ENCODE measurements at regions of chr16 and their contacts with region 1.

Region 1: DNA sequence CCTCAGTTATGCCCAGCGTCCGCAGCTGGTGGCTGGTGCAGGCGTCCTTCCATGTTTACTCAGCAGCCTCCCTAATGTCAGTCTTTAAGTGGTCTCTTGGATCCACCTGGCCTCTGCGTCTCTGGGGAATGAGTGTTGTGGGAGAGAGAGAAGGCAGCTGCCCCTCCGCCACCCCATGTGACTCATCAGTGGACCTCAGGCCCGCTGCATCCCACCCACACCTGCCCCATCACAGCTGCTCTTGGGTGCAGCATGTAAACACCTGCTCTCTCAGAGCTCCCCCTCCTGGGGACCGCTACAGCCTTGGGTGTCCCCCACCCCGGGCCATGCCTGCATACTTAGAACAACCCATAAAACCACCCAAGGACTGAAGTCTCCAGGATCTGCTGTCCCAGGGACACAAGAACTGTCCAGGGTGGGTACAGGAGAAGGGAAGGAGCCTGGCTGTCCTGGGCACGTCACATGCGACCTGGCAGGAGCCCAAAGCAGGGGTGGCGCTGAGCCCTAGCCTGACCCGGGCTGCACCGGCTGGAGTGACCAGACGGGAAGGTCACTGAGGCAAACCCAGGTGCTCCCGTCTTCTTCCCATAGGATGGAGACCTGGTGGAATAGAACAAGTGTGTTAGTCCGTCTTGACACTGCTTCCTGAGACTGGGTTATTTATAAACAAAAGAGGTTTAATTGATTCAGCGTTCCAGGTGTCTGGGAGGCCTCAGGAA is 4.2 kb downstream of the C16orf90 start:
- DNase-seq: peak; percentile 31 to 57 (median 41)
- ATAC-seq: peak; percentile 68
- H3K4me3 ChIP-seq: no peak overlapping the region
- H3K27ac ChIP-seq: no peak overlapping the region
- H3K4me1 ChIP-seq: peaks cover 0 to 39% of the 10 kb centered on the region in 2 experiments; a peak in 2 of 5 replicates
- H3K27me3 ChIP-seq: no peaks in the 10 kb centered on the region
- CTCF ChIP-seq: peak; percentile 37 to 53 (median 42); a peak in 5 of 6 replicates
- EP300 ChIP-seq: no peak
- POLR2A ChIP-seq: no peak
- RAD21 ChIP-seq: peak in 1 of 2 experiments; percentile 60; a peak in 2 of 4 replicates

Region 2: DNA sequence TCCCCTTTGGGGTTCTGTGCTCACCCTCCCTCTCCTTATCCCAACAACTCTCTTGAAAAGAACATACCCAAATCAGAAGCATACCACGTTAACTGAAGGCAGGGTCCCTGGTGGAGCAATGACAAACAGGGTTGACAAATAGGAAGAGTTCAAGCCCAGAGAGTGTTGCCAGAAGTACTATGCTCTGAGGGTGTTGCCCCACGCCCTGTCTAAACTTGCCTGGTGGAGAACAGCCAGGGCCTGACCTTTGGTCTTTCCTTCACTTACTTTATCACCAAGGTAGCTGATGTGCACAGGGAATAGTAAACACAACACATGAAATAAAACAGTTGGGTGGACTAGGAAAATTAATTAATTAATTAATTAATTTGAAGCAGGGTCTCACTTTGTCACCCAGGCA is 162.4 kb before region 1 on chr16:
- CTCF ChIA-PET with region 1: no interaction called
- POLR2A ChIA-PET with region 1: no interaction called
- in situ Hi-C with region 1: no loop called
- intact Hi-C with region 1: no loop called
- DNase-seq: peak in 1 of 4 experiments; percentile 1
- ATAC-seq: no peak
- H3K4me3 ChIP-seq: no peak overlapping the region
- H3K27ac ChIP-seq: no peak overlapping the region
- H3K4me1 ChIP-seq: no peaks in the 10 kb centered on the region; a peak in 1 of 5 replicates
- H3K27me3 ChIP-seq: peaks cover 4 to 5% of the 10 kb centered on the region in 2 experiments; a peak in 3 of 5 replicates
- CTCF ChIP-seq: no peak
- EP300 ChIP-seq: no peak
- POLR2A ChIP-seq: no peak
- RAD21 ChIP-seq: no peak

Region 3: DNA sequence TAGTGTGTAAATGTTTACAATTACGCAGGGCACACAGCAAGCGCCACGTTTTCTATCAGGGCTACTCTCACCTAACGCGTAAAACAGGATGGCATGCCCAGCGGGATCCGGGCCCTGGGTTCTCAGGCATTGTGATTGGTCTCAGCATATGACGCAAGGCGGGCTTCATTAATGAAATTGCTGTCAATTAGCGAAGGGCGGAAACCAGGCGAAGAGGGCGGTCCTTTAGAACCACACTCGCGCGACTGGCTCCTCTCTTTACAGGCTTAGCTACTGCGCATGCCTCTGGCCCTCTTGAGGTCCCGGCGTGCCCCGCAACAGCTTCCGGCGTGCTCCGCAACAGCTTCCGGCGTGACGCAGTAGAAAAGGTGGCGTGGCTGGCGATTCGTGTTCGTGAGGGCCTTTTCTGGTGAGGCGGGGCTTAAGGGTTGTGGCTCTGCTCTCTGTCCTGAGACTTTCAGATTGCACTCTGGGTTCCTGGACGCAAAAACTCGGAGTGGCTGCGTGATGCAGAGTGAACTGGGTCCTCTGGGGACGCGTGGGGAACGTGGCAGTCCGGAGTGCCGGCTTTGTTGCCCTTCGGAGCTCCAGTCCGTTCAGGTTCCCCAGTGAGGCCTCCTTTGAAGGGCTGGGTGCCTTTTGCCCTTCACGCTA is 126.2 kb before region 1 on chr16:
- CTCF ChIA-PET with region 1: no interaction called
- POLR2A ChIA-PET with region 1: no interaction called
- in situ Hi-C with region 1: no loop called
- intact Hi-C with region 1: loop called (anchors 10 kb)
- DNase-seq: no peak
- ATAC-seq: no peak
- H3K4me3 ChIP-seq: no peak overlapping the region
- H3K27ac ChIP-seq: no peak overlapping the region
- H3K4me1 ChIP-seq: peaks cover 0 to 6% of the 10 kb centered on the region in 2 experiments; a peak in 1 of 5 replicates
- H3K27me3 ChIP-seq: peaks cover 5 to 10% of the 10 kb centered on the region in 2 experiments; a peak in 3 of 5 replicates
- CTCF ChIP-seq: no peak
- EP300 ChIP-seq: no peak
- POLR2A ChIP-seq: no peak
- RAD21 ChIP-seq: no peak

Region 4: DNA sequence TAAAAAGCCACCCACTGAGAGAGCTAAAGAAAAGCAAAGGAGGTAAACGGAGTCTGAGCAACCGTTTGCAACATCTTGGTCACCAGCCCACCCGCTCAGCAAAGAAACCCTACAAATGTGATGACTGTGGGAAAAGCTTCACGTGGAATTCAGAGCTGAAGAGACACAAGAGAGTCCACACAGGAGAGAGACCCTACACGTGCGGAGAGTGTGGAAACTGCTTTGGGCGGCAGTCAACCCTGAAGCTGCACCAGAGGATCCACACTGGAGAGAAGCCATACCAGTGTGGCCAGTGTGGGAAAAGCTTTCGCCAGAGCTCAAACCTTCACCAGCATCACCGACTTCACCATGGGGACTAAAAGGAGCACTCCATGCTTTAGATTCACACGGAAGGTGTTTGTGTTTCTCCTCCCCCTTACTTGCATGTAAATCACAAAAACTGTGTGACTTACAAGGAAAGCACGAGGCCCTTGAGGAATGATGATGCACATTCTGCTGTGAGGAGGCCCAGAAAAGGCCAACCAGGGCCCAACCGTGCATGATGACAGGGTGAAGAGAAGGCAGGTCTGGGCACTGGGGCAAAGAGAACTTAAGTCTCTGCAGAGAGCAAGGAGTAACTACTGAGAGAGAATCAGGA is 82.4 kb before region 1 on chr16:
- CTCF ChIA-PET with region 1: no interaction called
- POLR2A ChIA-PET with region 1: no interaction called
- in situ Hi-C with region 1: loop called (anchors 5 kb)
- intact Hi-C with region 1: no loop called
- DNase-seq: no peak
- ATAC-seq: no peak
- H3K4me3 ChIP-seq: no peak overlapping the region
- H3K27ac ChIP-seq: no peak overlapping the region
- H3K4me1 ChIP-seq: peaks cover 0 to under 1% of the 10 kb centered on the region in 2 experiments; a peak in 1 of 5 replicates
- H3K27me3 ChIP-seq: no peaks in the 10 kb centered on the region
- CTCF ChIP-seq: no peak
- EP300 ChIP-seq: no peak
- POLR2A ChIP-seq: no peak
- RAD21 ChIP-seq: no peak

Region 5: DNA sequence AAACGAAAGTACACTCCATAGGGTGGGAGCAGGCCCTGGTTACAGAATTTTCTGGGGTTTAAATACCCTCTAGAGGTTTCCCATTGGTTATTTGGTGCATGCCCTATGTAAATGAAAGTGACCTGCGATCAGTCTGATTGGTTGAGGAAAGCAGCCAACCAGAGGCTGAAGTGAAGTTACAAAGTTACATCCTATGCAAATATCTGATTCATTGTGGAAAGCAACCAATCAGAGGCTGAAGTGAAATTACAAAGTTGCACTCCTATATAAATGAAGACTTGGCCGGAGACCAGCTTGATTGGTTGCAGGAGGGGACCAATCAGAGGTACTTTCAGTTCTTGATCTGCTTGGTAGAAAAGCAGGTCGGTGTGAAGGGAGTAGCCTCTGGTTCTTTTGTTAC is 23.1 kb before region 1 on chr16:
- CTCF ChIA-PET with region 1: no interaction called
- POLR2A ChIA-PET with region 1: no interaction called
- in situ Hi-C with region 1: no loop called
- intact Hi-C with region 1: no loop called
- DNase-seq: no peak
- ATAC-seq: peak; percentile 71
- H3K4me3 ChIP-seq: no peak overlapping the region
- H3K27ac ChIP-seq: no peak overlapping the region
- H3K4me1 ChIP-seq: peaks cover 0 to 5% of the 10 kb centered on the region in 2 experiments; a peak in 2 of 5 replicates
- H3K27me3 ChIP-seq: no peaks in the 10 kb centered on the region
- CTCF ChIP-seq: no peak
- EP300 ChIP-seq: no peak
- POLR2A ChIP-seq: no peak
- RAD21 ChIP-seq: no peak